GM13976 (cell line): ENCODE measurements at regions of chr19 and their contacts with region 1.

Region 1: DNA sequence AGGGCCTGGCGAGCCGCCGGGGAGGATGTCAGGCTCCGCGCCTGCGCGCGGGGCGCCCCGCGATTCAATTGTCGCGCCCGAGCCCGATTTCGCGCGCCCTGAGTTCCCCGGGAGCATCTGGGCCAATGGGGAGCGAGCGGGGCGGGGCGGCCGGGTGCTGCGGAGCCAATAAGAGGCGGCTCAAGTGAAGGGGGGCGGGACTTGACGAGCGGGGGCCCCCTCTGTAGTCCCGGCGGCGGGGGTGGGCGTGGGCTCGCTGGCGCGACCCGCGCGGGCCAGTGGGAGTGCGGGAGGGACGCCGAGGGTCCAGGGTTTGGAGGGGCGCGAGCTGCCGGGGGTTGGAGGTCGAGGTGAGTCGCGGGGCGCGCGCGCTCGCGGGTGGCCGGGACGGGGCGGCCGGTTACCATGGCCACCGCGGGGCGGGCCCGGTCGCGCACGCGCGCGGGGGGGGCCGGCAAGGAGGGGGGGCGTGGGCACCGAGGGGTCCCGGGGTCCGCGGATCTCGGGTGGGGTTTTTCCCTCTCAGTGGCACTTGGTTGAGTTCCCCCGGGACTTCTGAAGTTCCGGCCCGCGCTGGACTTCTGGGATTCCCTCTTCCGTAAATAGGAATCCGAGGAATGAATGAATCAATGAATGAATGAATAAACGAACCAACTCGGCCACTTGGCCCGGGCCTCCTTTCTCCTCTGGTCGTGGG is 744 bp downstream of the UHRF1 start:
- DNase-seq: peak; percentile 98
- CTCF ChIP-seq: no peak

Region 2: DNA sequence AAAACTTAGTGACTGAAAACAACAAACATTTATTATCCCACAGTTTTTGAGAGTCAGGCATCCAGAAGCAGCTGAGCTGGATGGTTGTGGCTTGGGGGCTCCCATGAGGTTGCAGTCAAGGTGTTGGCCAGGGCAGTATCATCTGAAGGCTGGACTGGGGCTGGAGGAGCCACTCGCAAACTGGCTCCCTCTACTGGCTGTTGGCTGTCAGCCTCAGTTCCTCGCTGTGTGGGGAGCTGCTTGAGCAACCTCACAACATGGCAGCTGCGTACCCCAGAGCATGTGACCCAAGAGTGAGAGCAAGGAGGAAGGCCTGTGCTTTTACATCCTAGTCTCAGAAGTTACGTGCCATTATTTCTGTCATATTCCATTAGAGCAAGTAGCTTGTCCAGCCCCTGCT is 653.5 kb before region 1 on chr19:
- in situ Hi-C with region 1: no loop called
- DNase-seq: no peak
- CTCF ChIP-seq: no peak

Region 3: DNA sequence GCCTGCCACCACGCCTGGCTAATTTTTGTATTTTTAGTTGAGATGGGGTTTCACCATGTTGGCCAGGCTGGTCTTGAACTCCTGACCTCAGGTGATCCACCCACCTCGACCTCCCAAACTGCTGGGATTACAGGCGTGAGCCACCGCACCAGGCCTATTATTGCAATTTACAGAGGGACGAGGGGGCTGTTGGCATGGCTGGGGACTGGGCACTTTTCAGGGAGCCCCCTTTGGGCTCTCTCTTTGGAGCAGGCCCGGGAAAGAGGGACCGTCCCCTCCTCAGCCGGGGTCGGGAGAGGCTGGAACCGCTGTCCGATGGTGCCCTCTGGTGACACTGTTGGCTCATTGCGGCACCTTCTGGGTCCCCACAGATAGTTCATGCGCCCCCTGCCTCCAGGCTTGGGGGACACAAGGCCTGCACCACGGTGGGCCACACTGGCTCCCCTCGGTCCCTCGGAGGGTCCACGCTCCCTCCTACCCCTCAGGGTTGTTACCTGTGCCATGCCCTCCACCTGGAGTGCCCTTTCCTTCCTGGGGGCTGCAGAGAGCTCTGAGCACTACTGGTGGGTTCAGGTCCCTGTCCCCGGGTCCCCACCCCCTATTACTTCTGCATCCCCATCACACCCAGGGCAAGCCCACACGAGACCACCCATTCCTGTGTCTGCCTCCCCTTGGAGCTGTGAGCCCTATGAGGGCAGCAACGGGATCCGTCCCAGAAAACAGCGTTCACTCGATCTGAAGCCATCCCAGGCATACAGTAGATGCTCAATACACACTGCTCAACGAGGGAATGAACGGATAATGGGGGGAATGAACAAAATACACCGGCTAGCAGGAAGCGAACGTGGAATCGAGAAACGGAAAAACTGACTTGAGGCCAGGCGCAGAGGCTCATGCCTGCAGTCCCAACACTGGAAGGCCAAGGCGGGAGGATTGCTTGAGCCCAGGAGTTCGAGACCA is 106.0 kb before region 1 on chr19:
- in situ Hi-C with region 1: loop called (anchors 10 kb)
- DNase-seq: peak; percentile 84
- CTCF ChIP-seq: peak; percentile 91